B cell (primary cell): ENCODE measurements at regions of chr6 and their contacts with region 1.

Region 1: GRCh38 chr6:10434692-10435376 is 20.0 kb upstream of the TFAP2A start:
- DNase-seq: peak; percentile 51
- ATAC-seq: no peak
- H3K4me3 ChIP-seq: no peak overlapping the region
- H3K4me3 Mint-ChIP-seq: no peak overlapping the region
- H3K27ac ChIP-seq: no peak overlapping the region
- H3K27ac Mint-ChIP-seq: no peak overlapping the region
- H3K4me1 ChIP-seq: peaks cover 3 to 8% of the 10 kb centered on the region in 2 donors
- H3K4me1 Mint-ChIP-seq: peaks cover 5% of the 10 kb centered on the region
- H3K27me3 ChIP-seq: peaks cover 0 to 9% (median 2%) of the 10 kb centered on the region in 4 experiments
- H3K27me3 Mint-ChIP-seq: peaks cover 18% of the 10 kb centered on the region
- CTCF ChIP-seq: peak; percentile 75

Region 2: DNA sequence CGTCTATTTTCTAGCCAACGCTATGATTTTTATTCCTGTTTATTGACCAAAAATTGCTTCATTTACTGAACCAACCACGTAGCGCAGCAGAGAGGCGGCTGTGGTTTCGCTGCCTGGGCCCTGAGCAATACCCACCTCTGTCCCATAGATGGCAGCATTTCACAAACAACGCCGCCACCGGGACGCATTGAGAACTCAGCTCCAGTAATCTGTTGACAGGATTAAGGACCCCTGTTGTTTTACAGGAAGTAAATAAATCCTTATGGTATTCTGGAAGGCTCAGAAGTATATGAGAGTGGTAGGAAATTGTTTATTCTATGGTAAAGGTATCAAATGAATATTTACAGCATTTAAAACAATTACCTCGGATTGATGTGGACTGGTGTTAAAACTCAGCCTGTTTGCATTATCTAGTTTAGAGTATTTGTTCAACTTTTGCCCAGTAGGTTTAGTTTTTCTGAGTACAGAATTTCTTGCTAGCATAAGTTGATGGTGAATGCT is 1451.6 kb before region 1 on chr6:
- CTCF ChIA-PET with region 1: interaction called, 50 read pairs
- POLR2A ChIA-PET with region 1: no interaction called
- intact Hi-C with region 1: loop called (anchors 1 kb)
- DNase-seq: peak; percentile 45
- ATAC-seq: peak; percentile 64
- H3K4me3 ChIP-seq: no peak overlapping the region
- H3K4me3 Mint-ChIP-seq: no peak overlapping the region
- H3K27ac ChIP-seq: no peak overlapping the region
- H3K27ac Mint-ChIP-seq: no peak overlapping the region
- H3K4me1 ChIP-seq: peaks cover 0 to 3% of the 10 kb centered on the region in 2 donors
- H3K4me1 Mint-ChIP-seq: no peaks in the 10 kb centered on the region
- H3K27me3 ChIP-seq: no peaks in the 10 kb centered on the region
- H3K27me3 Mint-ChIP-seq: no peaks in the 10 kb centered on the region
- CTCF ChIP-seq: peak; percentile 90